Activated CD4-positive, alpha-beta T cell treated with anti-CD3 and anti-CD28 coated beads, Interleukin-2, amount 10 ng/mL, durations not matched to agents 24 days and 14 days (primary cell): ENCODE measurements at regions of chrX and their contacts with region 1.

Region 1: DNA sequence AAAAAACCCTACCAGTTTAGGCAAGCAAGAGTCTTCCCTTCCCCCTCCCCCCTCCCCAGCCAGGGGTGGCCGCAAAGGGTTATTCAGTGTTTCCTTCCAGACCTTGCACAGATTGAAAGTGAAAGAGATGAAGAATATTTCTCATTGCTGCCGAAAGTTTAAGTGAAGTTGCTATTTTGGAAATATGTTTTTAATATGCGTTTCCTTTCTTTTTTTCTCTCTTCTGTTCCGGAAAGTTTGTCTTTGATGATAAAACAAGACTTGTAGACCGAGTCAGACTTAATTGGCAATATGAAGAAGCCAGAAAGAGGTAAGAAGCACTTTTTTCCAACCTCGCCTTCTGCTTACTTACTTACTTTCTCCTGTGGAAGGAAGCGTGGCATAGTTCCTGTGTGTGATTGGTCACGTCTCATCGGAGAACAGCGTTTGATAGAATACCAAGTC is 58.5 kb upstream of the CLCN4 start:
- DNase-seq: peak; percentile 89
- H3K4me3 Mint-ChIP-seq: peak overlapping the region; percentile 88
- H3K27ac Mint-ChIP-seq: peak overlapping the region; percentile 93
- H3K4me1 Mint-ChIP-seq: peaks cover 38% of the 10 kb centered on the region
- H3K27me3 Mint-ChIP-seq: no peaks in the 10 kb centered on the region

Region 2: DNA sequence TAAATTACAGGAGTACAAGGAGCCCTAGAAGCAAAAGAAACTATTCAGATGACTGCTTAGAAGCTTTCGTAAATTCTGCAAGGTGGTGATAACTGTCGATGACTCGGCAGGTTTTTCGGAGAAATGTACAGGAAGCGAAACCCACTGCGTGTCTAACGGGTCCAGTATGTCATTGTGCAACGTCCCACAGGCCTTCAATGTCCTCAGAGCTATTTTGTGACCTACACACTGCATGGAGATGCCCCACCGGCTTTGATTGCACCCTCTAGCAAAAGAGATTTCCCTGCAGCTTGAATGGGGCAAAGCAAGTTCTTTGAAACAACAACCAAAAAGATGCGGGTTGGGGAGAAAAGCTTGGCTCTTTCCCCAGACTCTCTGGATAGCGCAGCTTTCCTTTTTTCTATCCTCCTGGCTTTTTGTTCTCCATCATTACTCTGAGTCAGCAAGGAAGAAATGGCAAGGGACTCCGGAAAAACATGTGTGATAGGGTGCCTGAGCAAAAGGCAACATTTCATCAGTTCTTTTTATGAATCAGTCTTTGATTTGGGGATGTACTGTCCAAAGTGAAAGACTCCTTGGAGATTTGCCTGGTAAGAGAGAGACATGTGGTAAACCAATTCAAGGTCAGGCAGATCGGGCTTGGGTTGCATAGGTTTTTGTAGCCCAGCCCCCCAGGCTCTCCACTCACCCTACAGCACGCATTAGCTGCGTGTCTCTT is 745.4 kb before region 1 on chrX:
- intact Hi-C with region 1: loop called (anchors 5 kb)
- DNase-seq: peak; percentile 85
- H3K4me3 Mint-ChIP-seq: peak overlapping the region; percentile 71
- H3K27ac Mint-ChIP-seq: peak overlapping the region; percentile 86
- H3K4me1 Mint-ChIP-seq: peaks cover 31% of the 10 kb centered on the region
- H3K27me3 Mint-ChIP-seq: no peaks in the 10 kb centered on the region

Region 3: DNA sequence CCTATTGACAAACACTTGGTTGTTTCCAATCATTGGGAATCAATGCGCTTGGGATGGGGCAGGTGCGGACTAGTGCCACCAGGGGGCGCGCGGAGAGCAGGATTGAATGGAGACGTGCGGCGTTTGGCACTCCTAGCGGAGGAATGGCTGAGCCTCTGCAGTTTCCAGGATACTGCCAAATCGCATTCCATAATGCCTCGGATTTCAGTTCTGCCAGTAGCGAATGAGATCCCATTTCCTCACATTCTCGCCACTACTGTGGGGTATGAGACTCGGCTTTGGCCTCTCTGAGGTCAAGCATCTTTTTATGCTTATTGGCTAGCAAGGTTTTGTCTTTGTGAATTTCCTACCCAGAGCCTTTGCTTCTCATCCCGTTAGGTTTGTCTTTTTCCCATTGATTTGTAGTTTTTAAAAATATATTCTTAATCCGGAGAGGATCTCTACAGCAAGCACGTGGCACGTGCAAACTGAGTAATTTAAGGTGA is 102.4 kb before region 1 on chrX:
- intact Hi-C with region 1: loop called (anchors 1 kb)
- DNase-seq: peak; percentile 92
- H3K4me3 Mint-ChIP-seq: no peak overlapping the region
- H3K27ac Mint-ChIP-seq: no peak overlapping the region
- H3K4me1 Mint-ChIP-seq: peaks cover 7% of the 10 kb centered on the region
- H3K27me3 Mint-ChIP-seq: peaks cover 2% of the 10 kb centered on the region

Region 4: GRCh38 chrX:10083809-10084208 is 14.5 kb before region 1 on chrX:
- intact Hi-C with region 1: loop called (anchors 1 kb)
- DNase-seq: no peak
- H3K4me3 Mint-ChIP-seq: no peak overlapping the region
- H3K27ac Mint-ChIP-seq: no peak overlapping the region
- H3K4me1 Mint-ChIP-seq: peaks cover 30% of the 10 kb centered on the region
- H3K27me3 Mint-ChIP-seq: no peaks in the 10 kb centered on the region

Region 5: GRCh38 chrX:10119399-10119990 is 21.2 kb after region 1 on chrX:
- intact Hi-C with region 1: loop called (anchors 2 kb)
- DNase-seq: peak; percentile 90
- H3K4me3 Mint-ChIP-seq: no peak overlapping the region
- H3K27ac Mint-ChIP-seq: no peak overlapping the region
- H3K4me1 Mint-ChIP-seq: peaks cover 12% of the 10 kb centered on the region
- H3K27me3 Mint-ChIP-seq: no peaks in the 10 kb centered on the region